ENCODE measurements at regions of chr20 and their contacts with region 1.

Region 1: DNA sequence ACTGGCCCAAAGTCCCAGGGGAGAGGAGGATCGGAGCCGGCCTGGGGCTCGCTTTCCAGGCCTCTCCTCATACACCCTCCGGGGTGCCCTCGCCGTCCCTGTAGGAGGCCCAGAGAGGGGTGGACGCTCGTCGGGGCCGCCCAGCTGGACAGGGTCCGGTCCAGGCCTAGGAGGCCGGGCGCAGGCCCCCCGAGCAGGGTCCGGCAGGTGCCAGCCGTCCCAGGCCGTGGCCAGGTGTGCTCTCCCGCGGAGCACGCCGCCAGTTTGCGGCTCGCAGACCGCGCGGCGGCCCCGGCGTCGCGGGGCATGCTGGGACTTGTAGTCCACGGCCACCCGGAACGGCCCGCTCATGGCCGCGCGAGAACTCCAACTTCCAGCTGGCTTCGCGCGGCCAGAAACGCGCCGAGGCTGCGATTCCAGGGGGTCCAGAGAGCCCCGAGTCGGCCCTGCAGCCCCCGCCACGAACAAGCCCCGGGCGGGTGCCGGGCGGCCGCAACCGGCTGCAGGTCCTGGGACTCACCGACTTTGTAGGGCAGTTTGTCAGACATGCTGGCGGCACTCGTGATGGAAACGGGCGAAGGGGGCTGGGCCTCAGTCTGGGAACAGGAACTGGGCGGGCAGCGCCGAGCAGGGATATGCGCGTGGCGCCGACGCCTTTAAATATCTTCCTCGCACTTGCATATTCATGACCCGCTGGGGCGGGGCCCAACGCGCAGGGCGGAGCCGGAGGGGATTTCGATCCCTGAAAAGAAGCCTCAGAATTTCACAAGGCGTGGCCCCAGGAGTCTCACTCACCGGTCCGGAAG is at the start of gene AHCY:
- DNase-seq: peak; percentile 98
- total RNA-seq, gene AHCY: 45.7 TPM

Region 2: GRCh38 chr20:34058831-34059230 is 244.1 kb before region 1 on chr20:
- intact Hi-C with region 1: no loop called
- DNase-seq: no peak

Region 3: GRCh38 chr20:34254979-34255378 is 47.9 kb before region 1 on chr20:
- intact Hi-C with region 1: no loop called
- DNase-seq: no peak

Region 4: GRCh38 chr20:34268851-34269636 is 33.9 kb before region 1 on chr20:
- intact Hi-C with region 1: loop called (anchors 5 kb)
- DNase-seq: peak; percentile 78

Region 5: GRCh38 chr20:34363062-34363464 is 60.1 kb after region 1 on chr20 and contains the start of gene ITCH:
- intact Hi-C with region 1: loop called (anchors 2 kb)
- DNase-seq: peak; percentile 99
- total RNA-seq, gene ITCH: 36.4 TPM

Measured in cardiac septum (tissue), 1 donor.